ENCODE measurements at regions of chr15 and their contacts with region 1.

Region 1: DNA sequence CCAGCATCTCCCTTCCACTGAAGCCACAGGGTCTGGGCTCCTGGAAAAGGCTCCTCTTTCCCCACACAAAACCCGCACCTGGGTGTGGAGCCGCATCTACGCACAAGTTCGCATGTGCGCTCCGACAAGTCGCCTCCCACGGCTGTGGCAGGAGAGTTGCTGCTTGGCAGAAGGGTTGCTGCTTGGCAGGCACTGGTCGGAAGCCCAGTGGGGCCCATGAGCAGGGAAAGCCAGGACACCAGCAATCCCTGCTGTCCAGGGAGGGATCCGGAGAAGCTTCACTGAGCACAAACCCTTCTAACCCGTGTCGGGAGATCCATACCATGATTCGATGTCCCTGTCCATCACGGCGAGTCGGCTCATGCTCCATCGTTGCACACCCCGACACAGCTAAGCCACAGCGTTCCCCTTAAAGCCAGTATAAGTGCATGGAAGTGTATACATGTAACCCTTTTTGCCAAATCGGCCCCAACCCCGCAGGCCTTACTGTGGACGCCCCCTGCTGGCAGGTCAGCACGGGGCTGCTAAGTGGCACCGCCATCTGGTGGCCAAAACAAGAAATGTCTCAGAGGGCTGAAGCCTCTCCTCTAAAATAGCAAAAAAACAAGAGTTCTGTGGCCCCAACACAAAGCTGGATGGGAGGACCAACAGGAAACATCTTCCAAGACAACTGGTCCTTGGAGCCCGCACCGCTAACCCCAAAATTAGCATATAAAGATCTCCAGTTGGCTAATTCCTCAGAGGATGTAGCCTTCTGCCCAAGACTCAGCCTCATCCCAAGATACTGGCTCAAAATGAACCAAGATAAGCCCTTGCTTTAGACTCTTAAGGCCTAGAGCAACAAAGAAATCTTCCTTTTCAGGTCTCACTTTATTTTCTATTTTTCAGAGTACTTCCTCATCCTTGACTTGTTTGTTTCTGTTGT is 8.3 kb downstream of the ANKRD63 start:
- DNase-seq: peak; percentile 69 to 93 (median 84)
- ATAC-seq: peak; percentile 73 to 84 (median 80)
- H3K4me3 ChIP-seq: no peak overlapping the region
- H3K4me3 Mint-ChIP-seq: no peak overlapping the region
- H3K27ac ChIP-seq: no peak overlapping the region
- H3K27ac Mint-ChIP-seq: no peak overlapping the region
- H3K4me1 ChIP-seq: peaks cover 0 to 19% of the 10 kb centered on the region in 2 experiments
- H3K4me1 Mint-ChIP-seq: peaks cover 4 to 5% (median 4%) of the 10 kb centered on the region in 3 donors
- H3K27me3 ChIP-seq: peaks cover 0 to 36% of the 10 kb centered on the region in 2 experiments
- H3K27me3 Mint-ChIP-seq: peaks cover 3 to 28% of the 10 kb centered on the region in 2 donors

Region 2: GRCh38 chr15:40044717-40045571 is 229.7 kb before region 1 on chr15:
- CTCF ChIA-PET with region 1: interaction called, 18 to 22 read pairs
- POLR2A ChIA-PET with region 1: interaction called in 1 of 2 experiments, 3 read pairs
- DNase-seq: peak; percentile 53 to 88 (median 71)
- ATAC-seq: peak; percentile 76 to 93 (median 84)
- H3K4me3 ChIP-seq: peak overlapping the region in 1 of 2 donors; percentile 7
- H3K4me3 Mint-ChIP-seq: peak overlapping the region in 2 of 3 donors; percentile 35 to 66
- H3K27ac ChIP-seq: peak overlapping the region; percentile 4
- H3K27ac Mint-ChIP-seq: peak overlapping the region; percentile 65 to 95
- H3K4me1 ChIP-seq: peaks cover 33 to 58% of the 10 kb centered on the region in 2 experiments
- H3K4me1 Mint-ChIP-seq: peaks cover 44 to 73% (median 63%) of the 10 kb centered on the region in 3 donors
- H3K27me3 ChIP-seq: no peaks in the 10 kb centered on the region
- H3K27me3 Mint-ChIP-seq: no peaks in the 10 kb centered on the region

Region 3: GRCh38 chr15:40217159-40217824 is 57.3 kb before region 1 on chr15:
- CTCF ChIA-PET with region 1: interaction called, 39 to 48 read pairs
- POLR2A ChIA-PET with region 1: no interaction called
- DNase-seq: peak in 24 of 35 experiments; percentile 8 to 85 (median 25)
- ATAC-seq: peak; percentile 75 to 87 (median 82)
- H3K4me3 ChIP-seq: no peak overlapping the region
- H3K4me3 Mint-ChIP-seq: no peak overlapping the region
- H3K27ac ChIP-seq: no peak overlapping the region
- H3K27ac Mint-ChIP-seq: no peak overlapping the region
- H3K4me1 ChIP-seq: no peaks in the 10 kb centered on the region
- H3K4me1 Mint-ChIP-seq: no peaks in the 10 kb centered on the region
- H3K27me3 ChIP-seq: no peaks in the 10 kb centered on the region
- H3K27me3 Mint-ChIP-seq: no peaks in the 10 kb centered on the region

Region 4: DNA sequence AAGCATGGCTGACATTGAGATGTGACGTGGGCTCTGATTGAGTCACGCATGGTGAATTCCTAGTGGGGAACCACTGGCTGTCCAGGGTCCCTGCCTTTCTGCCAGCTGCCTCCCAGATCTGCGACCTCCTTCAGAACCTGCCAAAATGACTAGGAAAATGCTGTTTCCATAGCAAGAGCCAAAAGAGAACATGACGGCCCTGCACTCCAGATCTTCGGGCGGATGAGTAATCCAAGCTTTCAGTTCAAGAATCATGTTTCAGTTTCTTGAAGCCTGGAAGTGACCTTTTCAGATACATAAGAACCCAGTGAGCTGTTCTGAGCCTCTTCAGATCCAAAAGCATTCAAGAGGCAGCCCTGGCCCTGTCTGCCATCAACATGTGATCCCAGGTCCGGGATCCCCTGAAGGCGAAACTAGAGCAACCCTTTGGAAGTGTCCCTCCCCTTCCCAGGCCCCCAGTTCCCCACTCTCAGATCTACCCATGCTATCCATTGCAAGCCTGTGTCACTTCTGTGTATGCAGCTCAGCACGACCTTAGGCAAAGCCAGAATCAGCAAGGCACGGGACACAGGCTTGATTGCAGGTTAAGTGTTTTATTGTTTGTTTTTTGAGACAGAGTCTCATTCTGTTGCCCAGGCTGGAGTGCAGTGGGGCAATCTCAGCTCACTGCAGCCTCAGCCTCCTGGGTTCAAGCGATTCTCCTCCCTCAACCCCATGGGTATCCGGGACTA is 11.4 kb before region 1 on chr15:
- CTCF ChIA-PET with region 1: interaction called, 3 to 10 read pairs
- POLR2A ChIA-PET with region 1: no interaction called
- DNase-seq: no peak
- ATAC-seq: no peak
- H3K4me3 ChIP-seq: no peak overlapping the region
- H3K4me3 Mint-ChIP-seq: no peak overlapping the region
- H3K27ac ChIP-seq: no peak overlapping the region
- H3K27ac Mint-ChIP-seq: no peak overlapping the region
- H3K4me1 ChIP-seq: no peaks in the 10 kb centered on the region
- H3K4me1 Mint-ChIP-seq: no peaks in the 10 kb centered on the region
- H3K27me3 ChIP-seq: peaks cover 0 to 16% of the 10 kb centered on the region in 2 experiments
- H3K27me3 Mint-ChIP-seq: peaks cover 0 to 8% of the 10 kb centered on the region in 2 donors

Region 5: GRCh38 chr15:40307421-40308211 is 33.0 kb after region 1 on chr15 and contains the start of gene PLCB2:
- CTCF ChIA-PET with region 1: interaction called, 6 to 37 read pairs
- POLR2A ChIA-PET with region 1: no interaction called
- DNase-seq: peak; percentile 49 to 84 (median 71)
- ATAC-seq: peak; percentile 81 to 85 (median 83)
- H3K4me3 ChIP-seq: peak within 1 kb of the TSS; percentile 90 to 98
- H3K4me3 Mint-ChIP-seq: peak within 1 kb of the TSS; percentile 84 to 97 (median 92)
- H3K27ac ChIP-seq: peak within 1 kb of the TSS; percentile 92
- H3K27ac Mint-ChIP-seq: peak within 1 kb of the TSS; percentile 98 to 99
- H3K4me1 ChIP-seq: peaks cover 7 to 58% of the 10 kb centered on the region in 2 experiments
- H3K4me1 Mint-ChIP-seq: peaks cover 43 to 55% (median 51%) of the 10 kb centered on the region in 3 donors
- H3K27me3 ChIP-seq: no peaks in the 10 kb centered on the region
- H3K27me3 Mint-ChIP-seq: no peaks in the 10 kb centered on the region
- total RNA-seq, gene PLCB2: 242 to 293 (median 245) TPM

Region 6: GRCh38 chr15:40338041-40338657 is 63.5 kb after region 1 on chr15:
- CTCF ChIA-PET with region 1: interaction called, 20 to 28 read pairs
- POLR2A ChIA-PET with region 1: no interaction called
- DNase-seq: peak; percentile 44 to 87 (median 70)
- ATAC-seq: peak; percentile 80 to 89 (median 86)
- H3K4me3 ChIP-seq: no peak overlapping the region
- H3K4me3 Mint-ChIP-seq: no peak overlapping the region
- H3K27ac ChIP-seq: no peak overlapping the region
- H3K27ac Mint-ChIP-seq: no peak overlapping the region
- H3K4me1 ChIP-seq: peaks cover 11 to 33% of the 10 kb centered on the region in 2 experiments
- H3K4me1 Mint-ChIP-seq: peaks cover 17 to 22% (median 20%) of the 10 kb centered on the region in 3 donors
- H3K27me3 ChIP-seq: peaks cover 0 to 17% of the 10 kb centered on the region in 2 experiments
- H3K27me3 Mint-ChIP-seq: no peaks in the 10 kb centered on the region

Region 7: DNA sequence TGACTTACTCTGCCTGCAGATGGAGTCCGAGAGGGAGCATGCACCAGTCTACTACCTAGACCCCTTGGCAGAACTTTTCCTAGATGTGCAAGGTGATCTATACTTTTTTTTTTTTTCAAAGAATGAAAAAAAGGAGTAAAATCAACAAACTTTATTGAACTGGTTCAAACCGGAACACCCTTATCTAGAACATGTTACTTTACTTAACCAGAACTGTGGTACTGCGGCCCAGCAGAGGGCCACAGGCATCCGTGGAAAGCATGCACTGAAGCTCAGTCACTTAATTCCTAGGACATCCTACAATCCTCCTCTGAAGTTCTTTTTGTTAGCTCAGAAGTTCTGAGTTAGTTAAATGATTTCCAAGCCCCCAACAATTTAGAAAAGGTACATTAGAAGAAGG is 700.3 kb after region 1 on chr15:
- CTCF ChIA-PET with region 1: no interaction called
- POLR2A ChIA-PET with region 1: interaction called in 1 of 2 experiments, 10 read pairs
- DNase-seq: no peak
- ATAC-seq: no peak
- H3K4me3 ChIP-seq: no peak overlapping the region
- H3K4me3 Mint-ChIP-seq: no peak overlapping the region
- H3K27ac ChIP-seq: no peak overlapping the region
- H3K27ac Mint-ChIP-seq: no peak overlapping the region
- H3K4me1 ChIP-seq: no peaks in the 10 kb centered on the region
- H3K4me1 Mint-ChIP-seq: peaks cover 0 to 11% (median 3%) of the 10 kb centered on the region in 3 donors
- H3K27me3 ChIP-seq: no peaks in the 10 kb centered on the region
- H3K27me3 Mint-ChIP-seq: no peaks in the 10 kb centered on the region

Measured in T-cell (primary cell).